Activated B cell treated with CpG ODN at 0.5 μM for 24 hours (primary cell): ENCODE measurements at regions of chr13 and their contacts with region 1.

Region 1: DNA sequence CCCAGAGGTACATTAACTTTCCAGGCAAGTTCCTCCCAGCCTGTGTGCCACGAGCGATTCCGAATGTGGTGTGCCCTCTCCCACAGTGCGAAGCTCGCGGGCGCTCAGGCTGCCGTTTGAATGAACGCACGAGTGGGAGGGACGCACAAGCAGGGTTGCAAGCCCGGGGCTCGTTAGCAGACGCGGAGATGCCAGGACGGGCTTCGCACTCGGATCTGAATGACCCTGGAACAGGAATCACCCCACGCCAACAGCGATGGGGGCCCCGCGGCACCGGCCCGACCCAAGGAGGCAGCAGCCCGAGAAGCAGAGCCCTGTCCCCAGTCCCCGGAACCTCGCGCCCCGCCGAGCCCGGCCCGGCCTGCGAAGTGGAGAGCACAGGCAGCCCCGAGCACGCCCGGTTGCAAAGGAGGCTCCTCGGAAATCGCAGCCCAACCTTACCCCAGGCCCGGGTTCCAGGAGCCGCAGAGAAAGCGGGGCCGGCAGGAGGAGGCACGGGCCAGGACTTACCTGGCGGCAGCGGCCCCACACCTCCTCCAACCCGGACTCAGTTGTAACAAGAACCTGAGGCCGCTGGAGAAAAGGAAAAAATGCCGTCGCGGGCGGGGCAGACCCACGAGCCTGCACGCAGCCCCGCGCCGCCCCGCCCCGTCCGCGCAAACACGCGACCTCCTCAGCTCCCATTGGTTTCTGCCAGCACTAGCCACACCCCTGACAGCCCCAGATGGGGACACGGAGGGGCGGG is at the start of gene SLC25A30:
- DNase-seq: peak; percentile 87
- ATAC-seq: peak; percentile 96
- H3K4me3 Mint-ChIP-seq: peak within 1 kb of the TSS; percentile 95
- H3K27ac Mint-ChIP-seq: peak within 1 kb of the TSS; percentile 97
- H3K4me1 Mint-ChIP-seq: peaks cover 22% of the 10 kb centered on the region
- H3K27me3 Mint-ChIP-seq: no peaks in the 10 kb centered on the region
- CTCF ChIP-seq: no peak
- total RNA-seq, gene SLC25A30: 19.0 and 19.3 TPM in 2 replicates

Region 2: GRCh38 chr13:45367358-45367757 is 50.6 kb before region 1 on chr13:
- CTCF ChIA-PET with region 1: interaction called, 17 read pairs
- POLR2A ChIA-PET with region 1: interaction called, 7 read pairs
- intact Hi-C with region 1: loop called (anchors 1 kb)
- DNase-seq: peak; percentile 56
- ATAC-seq: peak; percentile 100
- H3K4me3 Mint-ChIP-seq: peak overlapping the region; percentile 39
- H3K27ac Mint-ChIP-seq: peak overlapping the region; percentile 82
- H3K4me1 Mint-ChIP-seq: peaks cover 32% of the 10 kb centered on the region
- H3K27me3 Mint-ChIP-seq: no peaks in the 10 kb centered on the region
- CTCF ChIP-seq: no peak

Region 3: GRCh38 chr13:45393941-45394570 is 23.9 kb before region 1 on chr13:
- CTCF ChIA-PET with region 1: interaction called, 5 read pairs
- POLR2A ChIA-PET with region 1: interaction called, 14 read pairs
- intact Hi-C with region 1: no loop called
- DNase-seq: no peak
- ATAC-seq: peak; percentile 74
- H3K4me3 Mint-ChIP-seq: no peak overlapping the region
- H3K27ac Mint-ChIP-seq: no peak overlapping the region
- H3K4me1 Mint-ChIP-seq: no peaks in the 10 kb centered on the region
- H3K27me3 Mint-ChIP-seq: no peaks in the 10 kb centered on the region
- CTCF ChIP-seq: no peak

Region 4: DNA sequence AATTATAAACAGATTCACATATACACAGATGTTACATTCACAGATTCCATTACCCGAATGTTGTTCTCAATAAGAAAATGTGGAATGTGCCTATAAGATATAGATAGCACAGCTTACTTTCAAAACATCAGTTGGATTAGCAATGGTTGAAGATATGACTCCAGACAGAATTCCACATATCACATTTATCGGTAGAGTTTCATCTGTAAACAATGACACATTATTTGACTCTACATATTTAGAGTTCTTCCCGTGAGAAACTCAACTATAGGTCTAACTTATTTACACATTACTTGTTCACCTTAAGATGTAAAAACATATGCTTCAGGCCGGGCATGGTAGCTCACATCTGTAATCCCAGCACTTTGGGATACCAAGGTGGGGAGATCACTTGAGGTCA is 13.8 kb before region 1 on chr13:
- CTCF ChIA-PET with region 1: no interaction called
- POLR2A ChIA-PET with region 1: interaction called, 10 read pairs
- intact Hi-C with region 1: no loop called
- DNase-seq: no peak
- ATAC-seq: no peak
- H3K4me3 Mint-ChIP-seq: no peak overlapping the region
- H3K27ac Mint-ChIP-seq: no peak overlapping the region
- H3K4me1 Mint-ChIP-seq: no peaks in the 10 kb centered on the region
- H3K27me3 Mint-ChIP-seq: no peaks in the 10 kb centered on the region
- CTCF ChIP-seq: no peak

Region 5: DNA sequence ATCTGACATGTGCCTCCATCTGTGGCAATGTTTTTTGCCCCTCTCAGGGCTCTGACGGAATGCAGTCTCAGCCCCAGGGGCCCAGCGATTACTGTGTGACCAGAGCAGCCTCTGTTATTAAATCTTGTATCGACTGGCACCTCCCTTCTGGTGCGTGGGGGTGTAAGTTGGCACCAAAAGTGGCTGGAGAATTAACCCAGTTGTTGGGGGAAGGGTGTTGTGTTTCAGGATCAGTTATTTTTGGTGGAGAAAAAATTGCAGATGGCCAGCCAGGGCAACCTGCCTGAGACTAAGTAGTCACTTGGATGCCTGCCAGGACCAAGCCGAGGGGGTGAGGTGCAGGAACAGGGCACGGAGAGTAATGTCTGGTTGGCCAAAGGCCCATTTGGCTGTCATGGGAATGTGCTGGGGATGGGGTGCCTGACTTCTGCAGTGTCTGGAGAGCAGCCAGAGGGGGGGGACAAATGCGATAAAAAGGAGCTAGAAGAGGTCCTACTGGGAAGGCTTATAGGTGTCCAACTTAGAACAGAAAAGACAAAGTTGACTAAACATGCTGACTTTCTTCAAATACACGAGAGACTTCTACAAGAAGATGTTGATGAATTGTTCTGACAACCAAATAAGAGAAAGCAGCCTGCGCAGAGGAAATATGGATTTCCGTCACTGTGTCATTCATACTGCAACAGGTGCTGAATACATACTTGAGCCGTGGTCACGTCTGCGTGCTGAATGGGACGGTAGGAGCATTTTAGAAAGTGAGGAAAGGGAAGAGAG is 363.8 kb after region 1 on chr13:
- CTCF ChIA-PET with region 1: no interaction called
- POLR2A ChIA-PET with region 1: no interaction called
- intact Hi-C with region 1: no loop called
- DNase-seq: no peak
- ATAC-seq: no peak
- H3K4me3 Mint-ChIP-seq: no peak overlapping the region
- H3K27ac Mint-ChIP-seq: no peak overlapping the region
- H3K4me1 Mint-ChIP-seq: no peaks in the 10 kb centered on the region
- H3K27me3 Mint-ChIP-seq: peaks cover 6% of the 10 kb centered on the region
- CTCF ChIP-seq: no peak

Region 6: GRCh38 chr13:46817095-46817494 is 1399.1 kb after region 1 on chr13:
- CTCF ChIA-PET with region 1: no interaction called
- POLR2A ChIA-PET with region 1: no interaction called
- intact Hi-C with region 1: no loop called
- DNase-seq: no peak
- ATAC-seq: no peak
- H3K4me3 Mint-ChIP-seq: no peak overlapping the region
- H3K27ac Mint-ChIP-seq: no peak overlapping the region
- H3K4me1 Mint-ChIP-seq: no peaks in the 10 kb centered on the region
- H3K27me3 Mint-ChIP-seq: peaks cover 17% of the 10 kb centered on the region
- CTCF ChIP-seq: no peak

Region 7: DNA sequence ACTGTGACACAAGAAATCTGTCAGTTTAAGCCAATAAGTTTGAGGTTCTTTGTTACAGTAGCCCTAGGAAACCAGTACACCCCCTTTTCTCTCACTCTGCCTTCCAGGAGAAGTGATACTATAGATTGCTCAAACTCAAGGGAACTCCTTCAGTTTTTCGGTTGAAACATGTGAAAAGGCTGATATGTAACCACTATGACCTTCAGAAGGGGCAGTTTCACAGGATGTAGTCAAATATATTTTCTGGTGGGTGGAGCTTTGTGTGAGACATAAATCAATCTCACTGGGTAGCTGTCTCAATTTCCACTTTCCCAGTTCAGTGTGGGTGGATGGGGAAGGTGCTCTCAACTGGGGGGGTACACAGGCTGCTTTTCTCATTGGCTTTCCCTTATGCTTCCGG is 1437.2 kb after region 1 on chr13:
- CTCF ChIA-PET with region 1: no interaction called
- POLR2A ChIA-PET with region 1: no interaction called
- intact Hi-C with region 1: no loop called
- DNase-seq: no peak
- ATAC-seq: no peak
- H3K4me3 Mint-ChIP-seq: no peak overlapping the region
- H3K27ac Mint-ChIP-seq: no peak overlapping the region
- H3K4me1 Mint-ChIP-seq: no peaks in the 10 kb centered on the region
- H3K27me3 Mint-ChIP-seq: peaks cover 10% of the 10 kb centered on the region
- CTCF ChIP-seq: no peak